ENCODE measurements at regions of chr2 and their contacts with region 1.

Region 1: GRCh38 chr2:236298924-236299475 is 34.8 kb upstream of the ASB18 start:
- DNase-seq: no peak
- H3K4me3 Mint-ChIP-seq: no peak overlapping the region
- H3K27ac Mint-ChIP-seq: no peak overlapping the region
- H3K4me1 Mint-ChIP-seq: no peaks in the 10 kb centered on the region
- H3K27me3 Mint-ChIP-seq: no peaks in the 10 kb centered on the region

Region 2: GRCh38 chr2:235157746-235158482 is 1141.1 kb before region 1 on chr2:
- intact Hi-C with region 1: loop called (anchors 5 kb)
- DNase-seq: no peak
- H3K4me3 Mint-ChIP-seq: no peak overlapping the region
- H3K27ac Mint-ChIP-seq: no peak overlapping the region
- H3K4me1 Mint-ChIP-seq: no peaks in the 10 kb centered on the region
- H3K27me3 Mint-ChIP-seq: no peaks in the 10 kb centered on the region